ENCODE measurements at regions of chr12 and their contacts with region 1.

Region 1: GRCh38 chr12:712172-712863 is 40.1 kb upstream of the WNK1 start:
- DNase-seq: no peak
- H3K4me3 Mint-ChIP-seq: no peak overlapping the region
- H3K27ac Mint-ChIP-seq: peak overlapping the region; percentile 70
- H3K4me1 Mint-ChIP-seq: peaks cover 29% of the 10 kb centered on the region
- H3K27me3 Mint-ChIP-seq: no peaks in the 10 kb centered on the region

Region 2: DNA sequence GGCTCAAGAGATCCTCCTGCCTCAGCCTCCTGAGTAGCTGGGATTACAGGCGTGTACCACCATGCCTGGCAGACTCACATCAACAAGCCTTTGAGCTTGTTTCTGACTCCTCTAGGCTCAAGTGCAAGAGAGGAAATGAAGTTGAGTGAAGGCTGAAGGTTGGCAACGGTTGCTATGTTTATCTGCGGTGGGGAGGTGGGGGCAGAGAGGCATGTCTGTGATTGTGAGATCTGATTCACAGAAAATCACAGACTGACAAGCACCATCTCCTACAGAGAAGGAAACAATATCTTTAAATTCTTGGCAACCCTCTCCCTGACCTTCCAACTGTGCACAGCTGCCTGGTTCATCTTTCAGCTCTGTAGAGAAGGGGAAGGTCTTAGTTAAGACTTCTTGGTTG is 26.9 kb before region 1 on chr12:
- intact Hi-C with region 1: loop called (anchors 1 kb)
- DNase-seq: peak; percentile 78
- H3K4me3 Mint-ChIP-seq: peak overlapping the region; percentile 17
- H3K27ac Mint-ChIP-seq: peak overlapping the region; percentile 81
- H3K4me1 Mint-ChIP-seq: peaks cover 32% of the 10 kb centered on the region
- H3K27me3 Mint-ChIP-seq: peaks cover 3% of the 10 kb centered on the region

Region 3: DNA sequence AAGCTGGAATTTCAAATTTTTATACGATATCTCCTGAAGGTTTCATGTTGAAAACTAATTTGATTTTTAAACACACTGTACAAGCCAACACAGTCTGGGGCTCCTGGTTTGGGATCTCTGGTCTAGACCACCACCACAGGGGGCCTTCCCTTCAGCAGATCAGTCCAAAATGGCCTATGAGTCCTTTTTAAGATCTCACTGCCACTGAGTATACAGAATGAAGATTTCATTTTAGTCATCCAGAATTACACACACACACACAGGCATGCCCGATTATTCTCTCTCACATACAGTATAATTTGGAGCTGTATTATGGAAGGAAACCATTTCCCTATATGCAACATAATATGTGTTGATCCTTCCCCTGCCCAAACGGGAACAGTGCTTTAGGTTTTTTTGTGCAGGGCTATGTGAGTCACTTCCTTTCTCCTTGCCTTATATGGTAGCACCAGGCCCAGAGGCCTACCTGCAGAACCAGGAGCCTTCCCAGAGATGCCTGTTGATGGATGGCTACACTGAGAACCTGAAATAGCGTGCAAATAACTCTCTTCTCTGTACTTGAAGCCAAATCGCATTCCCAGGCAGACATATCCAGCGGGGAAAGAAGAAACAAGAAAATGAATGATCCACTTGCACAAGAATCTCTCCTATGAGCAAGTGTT is 12.0 kb after region 1 on chr12:
- intact Hi-C with region 1: no loop called
- DNase-seq: no peak
- H3K4me3 Mint-ChIP-seq: no peak overlapping the region
- H3K27ac Mint-ChIP-seq: peak overlapping the region; percentile 47
- H3K4me1 Mint-ChIP-seq: peaks cover 51% of the 10 kb centered on the region
- H3K27me3 Mint-ChIP-seq: no peaks in the 10 kb centered on the region

Region 4: GRCh38 chr12:738712-739111 is 26.4 kb after region 1 on chr12:
- intact Hi-C with region 1: loop called (anchors 1 kb)
- DNase-seq: no peak
- H3K4me3 Mint-ChIP-seq: no peak overlapping the region
- H3K27ac Mint-ChIP-seq: no peak overlapping the region
- H3K4me1 Mint-ChIP-seq: peaks cover 21% of the 10 kb centered on the region
- H3K27me3 Mint-ChIP-seq: no peaks in the 10 kb centered on the region

Region 5: DNA sequence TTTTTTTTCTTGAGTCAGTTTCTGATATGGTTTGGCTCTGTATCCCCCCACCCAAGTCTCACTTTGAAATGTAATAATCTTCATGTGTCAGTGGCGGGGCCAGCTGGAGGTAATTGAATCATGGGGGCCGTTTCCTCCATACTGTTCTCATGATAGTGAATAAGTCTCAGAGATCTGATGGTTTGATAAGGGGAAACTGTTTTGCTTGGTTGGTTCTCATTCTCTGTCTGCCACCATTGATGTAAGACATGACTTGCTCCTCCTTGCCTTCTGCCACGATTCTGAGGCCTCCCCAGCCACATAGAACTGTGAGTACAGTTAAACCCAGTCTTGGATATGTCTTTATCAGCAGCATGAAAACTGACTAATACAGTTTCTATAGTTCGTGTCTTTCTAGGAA is 83.0 kb after region 1 on chr12:
- intact Hi-C with region 1: loop called (anchors 1 kb)
- DNase-seq: peak; percentile 51
- H3K4me3 Mint-ChIP-seq: peak overlapping the region; percentile 48
- H3K27ac Mint-ChIP-seq: peak overlapping the region; percentile 94
- H3K4me1 Mint-ChIP-seq: peaks cover 58% of the 10 kb centered on the region
- H3K27me3 Mint-ChIP-seq: no peaks in the 10 kb centered on the region

Measured in activated T-helper 2 cell treated with anti-CD3 and anti-CD28 coated beads, Interferon-gamma antibody, Interleukin-2, Interleukin-4, amounts not matched to agents 10 μg/mL and 5 μg/mL and 100 μg/mL, durations not matched to agents 14 hours and 24 hours and 36 hours (primary cell).